ENCODE measurements at regions of chr15 and their contacts with region 1.

Region 1: GRCh38 chr15:48861813-48862431 is 16.0 kb upstream of the EID1 start:
- DNase-seq: no peak
- ATAC-seq: peak; percentile 63
- H3K4me3 ChIP-seq: no peak overlapping the region
- H3K4me1 ChIP-seq: no peaks in the 10 kb centered on the region
- CTCF ChIP-seq: peak; percentile 51

Region 2: GRCh38 chr15:49145651-49146609 is 284.0 kb after region 1 on chr15:
- intact Hi-C with region 1: loop called (anchors 10 kb)
- DNase-seq: peak in 1 of 3 donors; percentile 70
- ATAC-seq: peak; percentile 48
- H3K4me3 ChIP-seq: no peak overlapping the region
- H3K4me1 ChIP-seq: no peaks in the 10 kb centered on the region
- CTCF ChIP-seq: peak; percentile 26

Region 3: GRCh38 chr15:49421991-49422390 is 560.1 kb after region 1 on chr15:
- intact Hi-C with region 1: loop called in 1 of 2 experiments (anchors 10 kb)
- DNase-seq: peak in 2 of 3 donors; percentile 31 to 78
- ATAC-seq: peak; percentile 85
- H3K4me3 ChIP-seq: no peak overlapping the region
- H3K4me1 ChIP-seq: no peaks in the 10 kb centered on the region
- CTCF ChIP-seq: peak; percentile 31

Region 4: GRCh38 chr15:50145451-50145872 is 1283.5 kb after region 1 on chr15:
- intact Hi-C with region 1: loop called in 1 of 2 experiments (anchors 10 kb)
- DNase-seq: peak in 1 of 3 donors; percentile 24
- ATAC-seq: peak; percentile 55
- H3K4me3 ChIP-seq: no peak overlapping the region
- H3K4me1 ChIP-seq: no peaks in the 10 kb centered on the region
- CTCF ChIP-seq: no peak

Measured in mucosa of descending colon (tissue), 3 donors.